Activated B cell treated with CpG ODN at 0.5 μM for 24 hours (primary cell): ENCODE measurements at regions of chr17 and their contacts with region 1.

Region 1: GRCh38 chr17:49815761-49816281 is 27.3 kb downstream of the KAT7 start:
- DNase-seq: no peak
- ATAC-seq: no peak
- H3K4me3 Mint-ChIP-seq: no peak overlapping the region
- H3K27ac Mint-ChIP-seq: no peak overlapping the region
- H3K4me1 Mint-ChIP-seq: no peaks in the 10 kb centered on the region
- H3K27me3 Mint-ChIP-seq: no peaks in the 10 kb centered on the region
- CTCF ChIP-seq: no peak

Region 2: GRCh38 chr17:49763735-49764558 is 51.9 kb before region 1 on chr17 and contains the start of gene FAM117A:
- CTCF ChIA-PET with region 1: no interaction called
- POLR2A ChIA-PET with region 1: no interaction called
- intact Hi-C with region 1: no loop called
- DNase-seq: peak; percentile 83
- ATAC-seq: peak; percentile 92
- H3K4me3 Mint-ChIP-seq: peak within 1 kb of the TSS; percentile 94
- H3K27ac Mint-ChIP-seq: peak within 1 kb of the TSS; percentile 79
- H3K4me1 Mint-ChIP-seq: peaks cover 57% of the 10 kb centered on the region
- H3K27me3 Mint-ChIP-seq: no peaks in the 10 kb centered on the region
- CTCF ChIP-seq: no peak
- total RNA-seq, gene FAM117A: 27.7 and 30.0 TPM in 2 replicates

Region 3: GRCh38 chr17:49832840-49833599 is 17.2 kb after region 1 on chr17:
- CTCF ChIA-PET with region 1: no interaction called
- POLR2A ChIA-PET with region 1: interaction called, 10 read pairs
- intact Hi-C with region 1: no loop called
- DNase-seq: no peak
- ATAC-seq: no peak
- H3K4me3 Mint-ChIP-seq: no peak overlapping the region
- H3K27ac Mint-ChIP-seq: no peak overlapping the region
- H3K4me1 Mint-ChIP-seq: peaks cover 11% of the 10 kb centered on the region
- H3K27me3 Mint-ChIP-seq: no peaks in the 10 kb centered on the region
- CTCF ChIP-seq: no peak

Region 4: GRCh38 chr17:49840066-49840465 is 24.2 kb after region 1 on chr17:
- CTCF ChIA-PET with region 1: no interaction called
- POLR2A ChIA-PET with region 1: interaction called, 11 read pairs
- intact Hi-C with region 1: no loop called
- DNase-seq: no peak
- ATAC-seq: no peak
- H3K4me3 Mint-ChIP-seq: no peak overlapping the region
- H3K27ac Mint-ChIP-seq: no peak overlapping the region
- H3K4me1 Mint-ChIP-seq: peaks cover 11% of the 10 kb centered on the region
- H3K27me3 Mint-ChIP-seq: no peaks in the 10 kb centered on the region
- CTCF ChIP-seq: no peak